IMR-90 (cell line): ENCODE measurements at regions of chr5 and their contacts with region 1.

Region 1: DNA sequence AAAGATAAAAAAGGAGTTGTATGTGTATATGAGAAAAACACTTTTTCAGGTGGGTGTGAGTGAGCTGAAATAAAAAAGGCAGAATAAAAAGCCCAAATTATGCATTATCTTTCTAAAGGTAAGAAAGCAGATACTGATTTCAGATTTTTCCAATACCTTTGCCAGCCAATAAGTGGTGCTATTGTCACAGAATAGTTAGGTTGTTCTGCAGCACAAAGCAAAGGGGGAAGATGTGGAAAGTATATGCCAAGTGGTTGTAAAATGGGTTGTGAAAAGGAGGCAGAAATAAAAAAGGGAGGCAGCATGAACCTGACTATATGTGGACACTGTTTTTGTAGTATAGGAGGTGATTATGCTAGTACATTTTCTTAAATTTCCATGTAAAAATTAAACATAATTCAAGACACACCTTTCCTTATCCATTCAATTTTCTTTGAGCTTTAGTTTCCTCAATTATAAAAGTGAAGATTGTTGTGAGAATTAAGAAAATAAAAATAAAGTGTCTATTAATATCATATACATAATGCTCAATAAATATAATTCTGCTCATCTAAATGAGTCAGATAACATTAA is 106.7 kb downstream of the SMIM15 start:
- DNase-seq: peak; percentile 72
- ATAC-seq: no peak
- H3K4me3 ChIP-seq: no peak overlapping the region
- H3K27ac ChIP-seq: no peak overlapping the region
- H3K4me1 ChIP-seq: peaks cover 4% of the 10 kb centered on the region; the same call in 1 of the 2 replicates
- H3K27me3 ChIP-seq: no peaks in the 10 kb centered on the region
- CTCF ChIP-seq: peak; percentile 76
- POLR2A ChIP-seq: no peak
- RAD21 ChIP-seq: peak; percentile 83

Region 2: GRCh38 chr5:61162010-61162831 is 106.7 kb after region 1 on chr5 and contains the start of gene SMIM15:
- CTCF ChIA-PET with region 1: no interaction called
- POLR2A ChIA-PET with region 1: no interaction called
- dilution Hi-C with region 1: no loop called
- in situ Hi-C with region 1: no loop called
- intact Hi-C with region 1: loop called (anchors 5 kb)
- DNase-seq: peak; percentile 87
- ATAC-seq: peak; percentile 95
- H3K4me3 ChIP-seq: peak within 1 kb of the TSS; percentile 94
- H3K27ac ChIP-seq: peak within 1 kb of the TSS; percentile 95
- H3K4me1 ChIP-seq: peaks cover 5% of the 10 kb centered on the region
- H3K27me3 ChIP-seq: no peaks in the 10 kb centered on the region
- CTCF ChIP-seq: no peak
- POLR2A ChIP-seq: peak; percentile 70
- RAD21 ChIP-seq: 0 out of 2 replicates have a peak, but pooled peaks have one; percentile 3
- total RNA-seq, gene SMIM15: 94.3 and 101 TPM in 2 replicates

Region 3: DNA sequence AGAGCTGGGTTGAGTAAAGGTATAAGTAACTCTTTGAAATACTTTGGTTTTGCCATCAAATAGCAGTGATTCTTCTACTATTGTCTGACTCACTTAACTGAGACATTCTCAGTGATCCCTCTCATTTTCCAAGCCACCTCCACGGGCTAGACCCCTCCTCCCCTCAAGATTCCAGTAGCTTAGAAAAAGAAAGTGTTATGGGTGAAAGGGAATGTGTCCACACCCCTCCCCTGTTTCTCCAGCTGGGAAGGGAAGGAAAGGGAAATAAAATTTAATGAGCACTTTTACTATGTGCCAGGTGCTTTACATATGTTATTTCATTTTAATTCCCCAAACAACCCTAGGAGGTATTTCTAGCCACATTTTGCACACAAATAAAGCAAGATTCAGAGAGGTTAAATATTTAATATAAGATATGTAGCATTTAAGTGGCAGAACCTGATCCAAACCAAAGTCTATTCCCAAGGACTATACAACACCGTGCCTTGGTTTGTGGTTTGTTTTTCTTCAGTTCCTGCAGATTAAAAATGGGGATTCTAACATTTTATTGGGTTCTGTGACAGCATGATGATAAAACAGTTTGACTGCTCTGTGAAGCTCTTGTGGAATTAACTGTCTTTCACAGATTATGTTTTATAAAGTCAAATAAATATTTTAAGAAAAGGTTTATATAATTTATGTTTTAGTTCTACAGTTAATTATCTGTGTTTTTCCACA is 412.4 kb after region 1 on chr5:
- CTCF ChIA-PET with region 1: no interaction called
- POLR2A ChIA-PET with region 1: no interaction called
- dilution Hi-C with region 1: no loop called
- in situ Hi-C with region 1: no loop called
- intact Hi-C with region 1: loop called (anchors 10 kb)
- DNase-seq: peak; percentile 66
- ATAC-seq: peak; percentile 63
- H3K4me3 ChIP-seq: no peak overlapping the region
- H3K27ac ChIP-seq: no peak overlapping the region
- H3K4me1 ChIP-seq: peaks cover 12% of the 10 kb centered on the region
- H3K27me3 ChIP-seq: no peaks in the 10 kb centered on the region
- CTCF ChIP-seq: no peak
- POLR2A ChIP-seq: no peak
- RAD21 ChIP-seq: no peak

Region 4: GRCh38 chr5:61647672-61648071 is 592.2 kb after region 1 on chr5:
- CTCF ChIA-PET with region 1: no interaction called
- POLR2A ChIA-PET with region 1: no interaction called
- dilution Hi-C with region 1: no loop called
- in situ Hi-C with region 1: no loop called
- intact Hi-C with region 1: no loop called
- DNase-seq: no peak
- ATAC-seq: no peak
- H3K4me3 ChIP-seq: no peak overlapping the region
- H3K27ac ChIP-seq: no peak overlapping the region
- H3K4me1 ChIP-seq: no peaks in the 10 kb centered on the region
- H3K27me3 ChIP-seq: peaks cover 33% of the 10 kb centered on the region
- CTCF ChIP-seq: no peak
- POLR2A ChIP-seq: no peak
- RAD21 ChIP-seq: no peak

Region 5: DNA sequence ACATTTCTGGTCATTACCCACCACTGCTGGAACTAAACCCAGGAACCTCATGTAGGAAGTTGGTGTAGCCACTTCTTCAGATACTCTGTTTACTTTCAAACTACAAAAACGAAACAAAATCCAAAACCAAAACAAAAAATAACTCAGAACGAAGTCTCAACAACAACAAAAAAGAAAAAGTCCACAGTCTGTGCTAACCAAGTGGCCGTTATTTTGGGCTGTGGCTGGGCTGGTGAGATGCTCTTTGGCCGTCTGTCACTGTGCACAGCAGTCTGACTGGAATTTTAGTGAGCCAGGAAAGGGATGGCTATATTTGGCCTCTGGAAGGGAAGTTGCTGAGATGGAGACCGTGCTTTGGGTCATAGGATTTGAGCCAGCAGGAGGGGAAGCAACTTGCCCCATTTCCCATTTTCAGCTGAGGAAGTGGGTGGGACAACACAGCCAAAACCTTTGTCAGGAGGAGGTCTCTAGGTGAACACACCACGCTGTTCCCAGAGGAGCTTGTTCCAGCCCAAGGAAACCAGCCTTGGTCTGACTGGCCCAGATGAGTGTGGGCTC is 610.6 kb after region 1 on chr5:
- CTCF ChIA-PET with region 1: no interaction called
- POLR2A ChIA-PET with region 1: no interaction called
- dilution Hi-C with region 1: no loop called
- in situ Hi-C with region 1: loop called (anchors 10 kb)
- intact Hi-C with region 1: no loop called
- DNase-seq: no peak
- ATAC-seq: no peak
- H3K4me3 ChIP-seq: no peak overlapping the region
- H3K27ac ChIP-seq: no peak overlapping the region
- H3K4me1 ChIP-seq: no peaks in the 10 kb centered on the region
- H3K27me3 ChIP-seq: peaks cover 31% of the 10 kb centered on the region
- CTCF ChIP-seq: no peak
- POLR2A ChIP-seq: no peak
- RAD21 ChIP-seq: no peak